ENCODE measurements at regions of chr1 and their contacts with region 1.

Region 1: GRCh38 chr1:203720262-203720661 is 44.7 kb upstream of the LAX1 start:
- DNase-seq: no peak
- ATAC-seq: no peak
- H3K4me3 ChIP-seq: no peak overlapping the region
- H3K27ac ChIP-seq: no peak overlapping the region
- H3K4me1 ChIP-seq: no peaks in the 10 kb centered on the region
- H3K27me3 ChIP-seq: no peaks in the 10 kb centered on the region

Region 2: GRCh38 chr1:203839059-203839458 is 118.8 kb after region 1 on chr1:
- intact Hi-C with region 1: loop called in 1 of 2 experiments (anchors 5 kb)
- DNase-seq: no peak
- ATAC-seq: no peak
- H3K4me3 ChIP-seq: no peak overlapping the region
- H3K27ac ChIP-seq: no peak overlapping the region
- H3K4me1 ChIP-seq: peaks cover 2% of the 10 kb centered on the region in 2 donors
- H3K27me3 ChIP-seq: no peaks in the 10 kb centered on the region

Measured in aorta (tissue), 5 donors.